K562 (cell line): ENCODE measurements at regions of chr22 and their contacts with region 1.

Region 1: DNA sequence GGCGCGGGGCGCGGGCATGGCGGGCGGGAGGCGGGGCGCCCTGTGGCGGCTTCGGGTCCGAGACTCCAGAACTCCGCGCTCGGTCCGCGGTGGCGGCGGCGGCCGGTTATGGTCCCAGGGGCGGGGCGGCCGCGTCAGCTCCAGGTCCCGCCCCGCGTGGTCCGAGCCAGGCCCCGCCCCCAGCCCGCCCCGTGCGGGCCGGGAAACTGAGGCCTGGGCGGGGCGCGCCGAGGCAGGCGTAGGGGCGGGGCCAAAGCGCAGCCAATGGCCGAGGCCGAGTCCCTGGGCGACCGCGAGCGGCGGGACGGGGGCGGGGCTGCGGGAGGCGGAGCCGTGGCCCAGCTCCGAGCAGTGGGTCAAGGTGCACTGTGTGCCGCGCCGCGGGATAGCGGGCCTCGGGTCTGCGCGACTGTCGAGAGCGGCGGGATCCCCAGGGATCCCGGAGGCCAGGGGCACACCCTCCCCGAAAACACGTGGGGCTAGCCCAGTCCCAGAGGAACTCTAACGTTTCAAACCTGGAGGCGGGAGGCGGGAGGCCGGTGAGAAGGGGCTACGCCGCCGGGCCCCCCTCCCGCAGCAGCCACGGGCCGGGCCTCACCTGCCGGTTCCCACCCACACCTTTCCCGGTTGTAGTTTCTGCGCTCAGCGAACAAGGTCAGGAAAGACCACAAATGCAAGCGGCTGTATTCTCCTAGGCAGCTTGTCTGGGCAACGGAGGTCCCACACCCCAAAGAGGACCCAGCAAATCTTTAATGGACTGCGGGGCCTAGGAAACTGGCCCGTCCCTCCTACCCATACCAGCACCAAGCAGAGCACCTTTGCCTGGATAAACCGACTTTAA is at the start of gene SLC25A1:
- DNase-seq: peak; percentile 100
- ATAC-seq: peak; percentile 86
- H3K4me3 ChIP-seq: peak within 1 kb of the TSS; percentile 76
- H3K27ac ChIP-seq: peak within 1 kb of the TSS; percentile 85
- H3K4me1 ChIP-seq: peaks cover 31 to 89% of the 10 kb centered on the region in 2 experiments
- H3K27me3 ChIP-seq: peaks cover 10 to 22% of the 10 kb centered on the region in 2 experiments; a peak in 4 of 5 replicates
- CTCF ChIP-seq: no peak
- EP300 ChIP-seq: no peak
- POLR2A ChIP-seq: no peak
- RAD21 ChIP-seq: no peak
- polyA plus RNA-seq, gene SLC25A1: 11.0 to 23.7 TPM

Region 2: DNA sequence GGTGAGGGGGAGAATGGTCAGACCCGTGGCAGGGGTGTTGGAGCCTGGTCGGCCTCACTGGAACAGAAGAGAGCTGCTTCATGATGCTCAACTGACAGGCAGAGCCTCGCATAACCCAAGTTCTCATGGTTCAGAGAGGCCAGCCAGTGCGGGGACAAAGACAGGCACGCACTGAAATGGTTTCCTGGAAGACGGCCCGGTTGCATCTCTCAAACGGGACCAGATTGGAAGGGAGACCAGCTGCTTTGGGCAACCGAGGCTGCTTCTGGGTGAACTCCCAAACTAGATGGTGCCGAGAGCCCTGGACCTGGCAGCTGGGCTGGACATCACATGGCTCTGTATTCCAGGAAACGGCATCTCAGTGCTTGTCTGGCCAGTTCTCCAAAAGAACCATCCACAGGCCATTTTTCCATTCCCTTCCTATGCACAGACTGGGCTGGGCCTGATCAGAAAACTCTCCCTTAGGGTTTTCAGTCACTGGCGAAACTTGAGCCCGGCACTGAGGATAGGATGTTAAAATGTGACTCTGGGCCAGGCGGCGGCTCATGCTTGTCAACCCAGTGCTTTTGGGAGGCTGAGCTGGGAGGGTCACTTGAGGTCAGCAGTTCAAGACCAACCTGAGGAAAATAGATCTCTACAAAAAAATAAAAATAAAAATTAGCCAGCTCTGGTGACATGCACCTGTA is 162.7 kb before region 1 on chr22:
- CTCF ChIA-PET with region 1: no interaction called
- POLR2A ChIA-PET with region 1: no interaction called
- in situ Hi-C with region 1: no loop called
- intact Hi-C with region 1: no loop called
- DNase-seq: peak in 2 of 4 experiments; percentile 25 to 26
- ATAC-seq: peak; percentile 25
- H3K4me3 ChIP-seq: no peak overlapping the region
- H3K27ac ChIP-seq: no peak overlapping the region
- H3K4me1 ChIP-seq: no peaks in the 10 kb centered on the region; a peak in 1 of 5 replicates
- H3K27me3 ChIP-seq: peaks cover 50 to 64% of the 10 kb centered on the region in 2 experiments
- CTCF ChIP-seq: no peak
- EP300 ChIP-seq: no peak
- POLR2A ChIP-seq: no peak
- RAD21 ChIP-seq: no peak

Region 3: GRCh38 chr22:19035474-19036228 is 143.2 kb before region 1 on chr22:
- CTCF ChIA-PET with region 1: no interaction called
- POLR2A ChIA-PET with region 1: interaction called, 3 read pairs
- in situ Hi-C with region 1: no loop called
- intact Hi-C with region 1: loop called (anchors 5 kb)
- DNase-seq: peak; percentile 64 to 76 (median 69)
- ATAC-seq: peak; percentile 62
- H3K4me3 ChIP-seq: no peak overlapping the region
- H3K27ac ChIP-seq: no peak overlapping the region
- H3K4me1 ChIP-seq: peaks cover 0 to 27% of the 10 kb centered on the region in 2 experiments; a peak in 1 of 5 replicates
- H3K27me3 ChIP-seq: peaks cover 13 to 26% of the 10 kb centered on the region in 2 experiments; a peak in 4 of 5 replicates
- CTCF ChIP-seq: peak; percentile 39 to 63 (median 55); a peak in 5 of 6 replicates
- EP300 ChIP-seq: no peak
- POLR2A ChIP-seq: peak; percentile 72
- RAD21 ChIP-seq: peak in 1 of 2 experiments; percentile 57; a peak in 2 of 4 replicates

Region 4: GRCh38 chr22:19195796-19196731 is 17.2 kb after region 1 on chr22:
- CTCF ChIA-PET with region 1: no interaction called
- POLR2A ChIA-PET with region 1: interaction called, 191 read pairs
- in situ Hi-C with region 1: no loop called
- intact Hi-C with region 1: no loop called
- DNase-seq: peak; percentile 61 to 76 (median 74)
- ATAC-seq: peak; percentile 22
- H3K4me3 ChIP-seq: no peak overlapping the region
- H3K27ac ChIP-seq: no peak overlapping the region
- H3K4me1 ChIP-seq: peaks cover 3 to 7% of the 10 kb centered on the region in 2 experiments; a peak in 4 of 5 replicates
- H3K27me3 ChIP-seq: peaks cover 66 to 82% of the 10 kb centered on the region in 2 experiments
- CTCF ChIP-seq: no peak
- EP300 ChIP-seq: no peak
- POLR2A ChIP-seq: no peak
- RAD21 ChIP-seq: 0 out of 4 replicates have a peak, but pooled peaks of 1 of the 2 experiments have one; percentile 3

Region 5: GRCh38 chr22:19214078-19214473 is 35.2 kb after region 1 on chr22:
- CTCF ChIA-PET with region 1: interaction called, 3 read pairs
- POLR2A ChIA-PET with region 1: interaction called, 9 read pairs
- in situ Hi-C with region 1: no loop called
- intact Hi-C with region 1: loop called (anchors 1 kb)
- DNase-seq: peak in 1 of 4 experiments; percentile 38
- ATAC-seq: no peak
- H3K4me3 ChIP-seq: no peak overlapping the region
- H3K27ac ChIP-seq: no peak overlapping the region
- H3K4me1 ChIP-seq: peaks cover 9 to 13% of the 10 kb centered on the region in 2 experiments
- H3K27me3 ChIP-seq: peaks cover 30 to 37% of the 10 kb centered on the region in 2 experiments
- CTCF ChIP-seq: no peak
- EP300 ChIP-seq: no peak
- POLR2A ChIP-seq: no peak
- RAD21 ChIP-seq: 0 out of 4 replicates have a peak, but pooled peaks of 1 of the 2 experiments have one; percentile 9

Region 6: DNA sequence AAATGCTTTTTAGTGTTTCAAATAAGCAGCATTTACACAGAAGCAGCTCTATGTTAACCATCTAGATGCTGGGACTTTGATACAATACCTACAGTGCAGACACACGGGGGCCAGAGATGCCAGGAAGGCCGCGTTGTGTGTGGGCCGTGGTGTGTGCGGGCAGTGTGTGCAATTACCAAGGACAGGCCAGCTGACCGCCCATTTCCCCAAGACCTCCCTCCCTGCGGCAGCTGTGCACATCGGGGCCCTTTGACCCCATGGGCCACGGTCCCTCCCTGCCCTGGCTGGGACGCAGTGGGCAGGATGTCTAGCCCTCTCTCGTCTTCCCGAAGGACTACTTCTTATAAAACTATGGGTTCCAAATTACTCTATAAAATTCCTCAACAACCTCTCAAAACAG is 74.3 kb after region 1 on chr22:
- CTCF ChIA-PET with region 1: no interaction called
- POLR2A ChIA-PET with region 1: no interaction called
- in situ Hi-C with region 1: no loop called
- intact Hi-C with region 1: no loop called
- DNase-seq: no peak
- ATAC-seq: peak; percentile 43
- H3K4me3 ChIP-seq: no peak overlapping the region
- H3K27ac ChIP-seq: no peak overlapping the region
- H3K4me1 ChIP-seq: peaks cover 0 to 3% of the 10 kb centered on the region in 2 experiments; a peak in 2 of 5 replicates
- H3K27me3 ChIP-seq: peaks cover 8 to 15% of the 10 kb centered on the region in 2 experiments; a peak in 4 of 5 replicates
- CTCF ChIP-seq: no peak
- EP300 ChIP-seq: no peak
- POLR2A ChIP-seq: no peak
- RAD21 ChIP-seq: no peak

Region 7: DNA sequence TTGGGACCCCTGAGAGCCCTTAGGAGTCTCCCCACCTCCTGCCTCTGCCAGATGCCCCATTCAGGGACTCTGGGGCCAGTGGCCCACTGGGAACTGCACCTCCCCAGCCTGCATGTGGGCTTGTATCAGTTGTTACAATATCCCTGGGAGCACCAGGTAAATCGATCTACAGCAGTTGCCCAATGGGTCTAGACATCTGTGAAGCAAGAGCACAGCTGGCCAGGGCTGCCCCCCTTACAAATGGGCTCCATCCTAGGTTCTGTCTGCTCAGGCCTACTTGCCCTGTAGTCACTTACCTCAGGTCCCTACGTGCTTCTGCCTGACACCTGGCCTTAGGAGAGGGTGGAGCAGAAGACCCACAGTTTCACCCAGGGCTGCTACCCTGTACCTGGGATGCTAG is 190.0 kb after region 1 on chr22:
- CTCF ChIA-PET with region 1: interaction called, 5 read pairs
- POLR2A ChIA-PET with region 1: interaction called, 5 read pairs
- in situ Hi-C with region 1: no loop called
- intact Hi-C with region 1: loop called (anchors 5 kb)
- DNase-seq: no peak
- ATAC-seq: no peak; the same call in 1 of the 3 replicates
- H3K4me3 ChIP-seq: no peak overlapping the region
- H3K27ac ChIP-seq: no peak overlapping the region
- H3K4me1 ChIP-seq: no peaks in the 10 kb centered on the region
- H3K27me3 ChIP-seq: no peaks in the 10 kb centered on the region
- CTCF ChIP-seq: no peak
- EP300 ChIP-seq: no peak
- POLR2A ChIP-seq: no peak
- RAD21 ChIP-seq: no peak

Region 8: DNA sequence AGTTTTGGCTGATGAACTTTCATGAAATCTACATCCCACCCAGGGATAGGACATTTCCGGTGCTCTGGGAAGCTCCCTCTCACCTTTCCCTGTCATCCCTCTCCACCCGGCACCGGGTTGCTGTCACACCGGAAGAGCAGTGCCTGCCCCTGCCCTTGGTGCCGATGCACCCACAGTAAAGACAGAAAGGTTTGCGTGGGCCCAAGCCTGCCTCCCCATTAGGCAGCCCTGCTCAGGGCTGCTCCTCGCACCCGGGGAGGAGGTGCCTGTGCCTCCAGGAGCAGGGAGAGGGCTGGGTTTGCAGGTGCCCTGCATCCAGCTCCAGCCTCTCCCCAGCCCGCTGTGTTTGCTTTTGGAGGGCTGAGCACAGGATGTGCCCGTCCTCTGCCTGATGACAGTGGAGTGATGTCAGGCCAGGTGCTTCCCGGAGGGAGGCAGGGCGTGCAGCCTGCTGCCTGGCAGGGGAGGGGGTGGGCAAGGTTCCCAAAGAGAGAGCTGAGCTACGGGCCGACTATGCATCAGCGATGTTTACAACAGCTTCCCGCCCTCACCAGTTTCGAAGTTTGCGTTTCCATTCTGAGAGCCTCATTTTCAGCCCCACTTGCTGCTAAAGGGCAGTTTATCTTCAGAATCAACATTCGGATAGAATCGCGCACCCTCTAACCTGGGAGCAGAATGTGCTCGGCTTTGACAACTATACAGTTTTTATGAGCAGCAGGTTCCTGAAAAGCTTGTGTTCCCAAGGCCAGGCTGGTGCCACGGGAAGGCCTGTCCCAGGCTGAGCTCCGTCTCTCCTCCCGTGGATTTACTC is 428.5 kb after region 1 on chr22:
- CTCF ChIA-PET with region 1: no interaction called
- POLR2A ChIA-PET with region 1: no interaction called
- in situ Hi-C with region 1: no loop called
- intact Hi-C with region 1: no loop called
- DNase-seq: peak in 1 of 4 experiments; percentile 45
- ATAC-seq: peak; percentile 2; the same call in 1 of the 3 replicates
- H3K4me3 ChIP-seq: no peak overlapping the region
- H3K27ac ChIP-seq: no peak overlapping the region
- H3K4me1 ChIP-seq: peaks cover 9 to 22% of the 10 kb centered on the region in 2 experiments; a peak in 4 of 5 replicates
- H3K27me3 ChIP-seq: peaks cover 90 to 92% of the 10 kb centered on the region in 2 experiments
- CTCF ChIP-seq: no peak
- EP300 ChIP-seq: no peak
- POLR2A ChIP-seq: no peak
- RAD21 ChIP-seq: no peak